ENCODE measurements at regions of chr4 and their contacts with region 1.

Region 1: DNA sequence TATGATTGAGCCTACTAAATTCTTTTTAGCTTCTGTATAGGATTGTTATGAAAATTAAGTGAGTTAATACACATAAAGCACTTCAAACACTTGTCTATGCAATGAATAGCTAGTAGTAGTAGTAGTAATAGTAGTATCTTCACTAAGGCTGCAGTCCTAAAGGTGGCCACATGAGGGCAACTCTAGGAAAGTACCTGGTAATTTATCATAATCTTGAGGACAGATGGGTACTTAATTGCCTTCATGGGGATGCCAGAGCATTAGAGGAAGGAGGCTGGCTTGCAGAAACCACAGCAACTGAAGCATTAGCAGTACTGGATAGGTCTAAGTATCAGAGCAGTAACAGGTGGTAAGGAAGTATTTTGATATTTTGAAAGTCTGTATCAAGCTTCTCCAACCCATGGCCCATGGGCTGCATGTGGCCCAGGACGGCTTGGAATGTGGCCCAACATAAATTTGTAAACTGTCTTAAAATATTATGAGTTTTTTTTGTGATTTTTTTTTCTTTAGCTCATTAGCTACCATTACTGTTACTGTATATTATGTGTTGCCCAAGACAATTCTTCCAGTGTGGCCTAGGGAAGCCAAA is 17.3 kb downstream of the NIPAL1 start:
- DNase-seq: peak; percentile 28
- H3K4me3 Mint-ChIP-seq: no peak overlapping the region
- H3K27ac Mint-ChIP-seq: no peak overlapping the region
- H3K4me1 Mint-ChIP-seq: peaks cover 33% of the 10 kb centered on the region
- H3K27me3 Mint-ChIP-seq: peaks cover 4% of the 10 kb centered on the region

Region 2: GRCh38 chr4:47624031-47624441 is 409.9 kb before region 1 on chr4:
- intact Hi-C with region 1: no loop called
- DNase-seq: no peak
- H3K4me3 Mint-ChIP-seq: no peak overlapping the region
- H3K27ac Mint-ChIP-seq: no peak overlapping the region
- H3K4me1 Mint-ChIP-seq: no peaks in the 10 kb centered on the region
- H3K27me3 Mint-ChIP-seq: peaks cover 5% of the 10 kb centered on the region

Region 3: DNA sequence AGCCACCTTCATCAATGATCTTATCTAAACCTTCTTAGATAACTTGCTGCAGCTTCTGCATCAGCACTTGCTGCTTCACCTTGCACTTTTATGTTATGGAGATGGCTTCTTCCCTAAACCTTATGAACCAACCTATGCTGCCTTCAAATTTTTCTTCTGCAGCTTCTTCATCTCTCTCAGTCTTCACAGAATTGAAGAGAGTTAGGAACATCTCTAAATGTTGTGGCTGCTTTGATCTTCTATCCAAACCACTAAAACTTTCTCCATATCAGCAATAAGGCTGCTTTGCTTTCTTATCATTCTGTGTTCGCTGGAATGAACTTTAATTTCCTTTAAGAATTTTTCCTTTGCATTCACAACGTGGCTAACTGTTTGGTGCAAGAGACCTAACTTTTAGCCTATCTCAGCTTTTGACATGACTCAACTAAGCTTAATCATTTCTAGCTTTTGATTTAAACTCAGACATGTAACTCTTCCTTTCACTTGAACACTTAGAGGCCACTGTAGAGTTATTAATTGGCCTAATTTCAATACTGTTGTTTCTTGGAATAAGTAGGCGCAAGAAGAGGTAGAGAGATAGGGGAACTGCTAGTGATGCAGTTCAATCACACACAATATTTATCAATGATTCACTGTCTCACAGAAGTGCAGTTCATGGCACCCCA is 159.9 kb before region 1 on chr4:
- intact Hi-C with region 1: loop called (anchors 1 kb)
- DNase-seq: no peak
- H3K4me3 Mint-ChIP-seq: no peak overlapping the region
- H3K27ac Mint-ChIP-seq: no peak overlapping the region
- H3K4me1 Mint-ChIP-seq: peaks cover 8% of the 10 kb centered on the region
- H3K27me3 Mint-ChIP-seq: no peaks in the 10 kb centered on the region

Region 4: DNA sequence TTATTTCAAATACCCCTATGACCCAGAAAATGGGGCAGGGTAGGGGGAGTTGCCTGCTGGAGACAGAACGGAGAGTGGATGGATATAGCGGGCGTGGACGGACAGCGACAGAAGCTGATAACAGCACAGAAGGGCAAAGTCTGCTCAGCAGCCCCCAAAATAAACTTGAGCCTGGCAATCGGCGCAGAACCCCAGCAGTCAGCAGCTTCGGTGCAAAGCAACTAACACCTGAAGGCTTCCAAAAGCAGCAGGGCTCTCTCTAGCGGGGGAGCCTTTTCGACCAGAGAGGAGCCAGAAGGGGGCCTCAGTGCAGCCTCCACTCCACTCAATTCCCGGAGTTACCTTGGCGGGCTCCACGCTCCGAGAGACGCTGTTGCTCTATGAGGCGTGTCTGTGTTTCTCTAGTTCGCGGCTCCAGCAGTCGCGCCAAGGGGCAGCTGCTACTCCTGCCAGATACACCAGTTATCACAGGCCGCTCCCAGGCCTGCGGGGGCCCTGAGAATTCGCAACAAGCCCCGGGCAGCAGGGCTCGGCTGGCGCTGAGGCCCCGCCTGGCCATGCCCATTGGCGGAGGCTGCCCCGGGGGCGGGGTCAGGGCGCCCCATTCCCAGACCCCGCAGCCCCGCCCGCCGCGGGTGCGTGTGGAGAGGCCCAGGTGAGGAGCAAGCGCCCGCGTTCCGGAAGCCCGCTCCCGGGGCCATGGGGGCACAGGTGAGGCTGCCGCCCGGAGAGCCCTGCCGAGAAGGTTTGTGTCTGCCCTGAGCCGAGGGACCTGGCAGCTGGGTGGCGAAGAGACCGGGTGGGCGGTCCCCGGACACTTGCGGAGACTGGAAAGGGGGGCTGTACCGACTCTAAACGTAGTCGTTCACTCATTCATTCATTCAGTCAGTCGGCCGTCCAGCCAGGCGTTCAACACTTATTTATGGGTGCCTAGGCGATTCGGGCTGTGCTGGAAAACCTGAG is 17.5 kb before region 1 on chr4 and contains the starts of genes CNGA1 and NIPAL1:
- intact Hi-C with region 1: loop called (anchors 1 kb)
- DNase-seq: peak; percentile 51
- H3K4me3 Mint-ChIP-seq: peak within 1 kb of the TSS; percentile 80
- H3K27ac Mint-ChIP-seq: peak within 1 kb of the TSS; percentile 48
- H3K4me1 Mint-ChIP-seq: peaks cover 12% of the 10 kb centered on the region
- H3K27me3 Mint-ChIP-seq: peaks cover 28% of the 10 kb centered on the region
- total RNA-seq, gene CNGA1: not detected in 2 replicates
- total RNA-seq, gene NIPAL1: 2.0 and 2.5 TPM in 2 replicates

Region 5: GRCh38 chr4:48047421-48047844 is 13.5 kb after region 1 on chr4:
- intact Hi-C with region 1: loop called (anchors 1 kb)
- DNase-seq: peak; percentile 55
- H3K4me3 Mint-ChIP-seq: peak overlapping the region; percentile 44
- H3K27ac Mint-ChIP-seq: peak overlapping the region; percentile 10
- H3K4me1 Mint-ChIP-seq: peaks cover 35% of the 10 kb centered on the region
- H3K27me3 Mint-ChIP-seq: peaks cover 63% of the 10 kb centered on the region

Region 6: GRCh38 chr4:48065587-48066052 is 31.7 kb after region 1 on chr4:
- intact Hi-C with region 1: loop called (anchors 1 kb)
- DNase-seq: no peak
- H3K4me3 Mint-ChIP-seq: no peak overlapping the region
- H3K27ac Mint-ChIP-seq: no peak overlapping the region
- H3K4me1 Mint-ChIP-seq: no peaks in the 10 kb centered on the region
- H3K27me3 Mint-ChIP-seq: peaks cover 2% of the 10 kb centered on the region

Region 7: GRCh38 chr4:48103483-48104139 is 69.7 kb after region 1 on chr4:
- intact Hi-C with region 1: loop called (anchors 1 kb)
- DNase-seq: no peak
- H3K4me3 Mint-ChIP-seq: no peak overlapping the region
- H3K27ac Mint-ChIP-seq: peak overlapping the region; percentile 63
- H3K4me1 Mint-ChIP-seq: peaks cover 24% of the 10 kb centered on the region
- H3K27me3 Mint-ChIP-seq: no peaks in the 10 kb centered on the region

Region 8: DNA sequence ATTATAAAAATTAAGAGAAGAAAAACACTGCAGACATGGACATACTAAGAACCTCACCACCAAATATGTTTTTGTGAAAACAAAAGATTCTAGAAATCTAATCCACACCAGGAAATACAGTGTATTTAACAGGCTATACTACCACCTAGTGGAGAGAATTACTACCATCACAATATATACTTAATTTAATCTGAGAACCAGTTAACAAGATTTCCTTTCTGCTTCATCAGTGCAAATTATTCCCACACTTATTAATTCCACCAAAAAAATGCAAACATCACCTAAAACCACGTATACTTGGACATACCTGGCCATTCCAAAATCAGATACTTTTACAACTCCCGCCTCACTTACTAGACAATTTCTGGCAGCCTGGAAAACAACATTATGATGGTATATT is 107.1 kb after region 1 on chr4:
- intact Hi-C with region 1: loop called (anchors 1 kb)
- DNase-seq: no peak
- H3K4me3 Mint-ChIP-seq: no peak overlapping the region
- H3K27ac Mint-ChIP-seq: peak overlapping the region; percentile 1
- H3K4me1 Mint-ChIP-seq: peaks cover 52% of the 10 kb centered on the region
- H3K27me3 Mint-ChIP-seq: no peaks in the 10 kb centered on the region

Measured in activated T-helper 1 cell treated with anti-CD3 and anti-CD28 coated beads, Interleukin-12 subunit alpha, Interleukin-12 subunit beta, Interleukin-2, Interleukin-4 antibody, amounts not matched to agents 30 ng/mL and 10 ng/mL and 1 ng/mL, durations not matched to agents 14 hours and 24 hours and 36 hours (primary cell).